ENCODE measurements at regions of chr14 and their contacts with region 1.

Region 1: DNA sequence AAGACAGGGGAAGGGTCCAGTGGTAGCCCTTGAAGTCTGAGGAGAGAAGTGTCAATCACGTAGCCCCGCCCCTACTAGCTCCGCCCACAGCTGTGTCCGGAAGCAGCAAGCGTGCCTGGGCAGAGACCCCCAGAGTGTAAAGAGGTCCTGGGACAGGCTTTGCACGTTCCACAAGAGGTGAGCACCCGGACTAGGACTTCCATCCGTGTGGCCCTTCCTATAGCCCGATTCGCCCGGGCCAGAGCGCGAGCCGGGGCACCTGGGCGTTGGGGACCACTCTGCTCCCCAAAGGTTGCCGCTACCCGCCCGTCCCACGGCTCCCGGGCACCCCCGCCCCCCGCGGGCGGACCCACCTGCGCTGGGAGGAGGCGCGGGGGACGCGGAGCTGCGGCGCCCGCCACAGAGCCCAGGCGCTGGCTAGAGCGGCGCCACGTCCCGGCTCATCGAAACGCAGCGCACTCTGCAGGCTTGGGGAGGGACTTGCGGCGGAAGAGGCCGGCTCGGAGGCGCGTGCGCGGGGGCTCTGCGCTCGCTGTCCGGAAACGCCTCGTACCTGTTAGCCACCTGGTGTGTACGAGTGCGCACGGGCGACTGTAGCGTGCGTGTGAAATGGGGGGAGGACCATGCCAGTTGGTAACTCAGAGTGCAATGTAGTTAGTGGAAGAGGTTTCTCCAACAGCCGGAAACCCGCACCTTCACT is at the start of gene RABGGTA:
- DNase-seq: peak; percentile 94
- ATAC-seq: peak; percentile 85
- H3K4me3 Mint-ChIP-seq: peak within 1 kb of the TSS; percentile 83
- H3K27ac Mint-ChIP-seq: peak within 1 kb of the TSS; percentile 97
- H3K4me1 Mint-ChIP-seq: peaks cover 46% of the 10 kb centered on the region
- H3K27me3 Mint-ChIP-seq: no peaks in the 10 kb centered on the region
- total RNA-seq, gene RABGGTA: 52.1 to 56.0 TPM

Region 2: DNA sequence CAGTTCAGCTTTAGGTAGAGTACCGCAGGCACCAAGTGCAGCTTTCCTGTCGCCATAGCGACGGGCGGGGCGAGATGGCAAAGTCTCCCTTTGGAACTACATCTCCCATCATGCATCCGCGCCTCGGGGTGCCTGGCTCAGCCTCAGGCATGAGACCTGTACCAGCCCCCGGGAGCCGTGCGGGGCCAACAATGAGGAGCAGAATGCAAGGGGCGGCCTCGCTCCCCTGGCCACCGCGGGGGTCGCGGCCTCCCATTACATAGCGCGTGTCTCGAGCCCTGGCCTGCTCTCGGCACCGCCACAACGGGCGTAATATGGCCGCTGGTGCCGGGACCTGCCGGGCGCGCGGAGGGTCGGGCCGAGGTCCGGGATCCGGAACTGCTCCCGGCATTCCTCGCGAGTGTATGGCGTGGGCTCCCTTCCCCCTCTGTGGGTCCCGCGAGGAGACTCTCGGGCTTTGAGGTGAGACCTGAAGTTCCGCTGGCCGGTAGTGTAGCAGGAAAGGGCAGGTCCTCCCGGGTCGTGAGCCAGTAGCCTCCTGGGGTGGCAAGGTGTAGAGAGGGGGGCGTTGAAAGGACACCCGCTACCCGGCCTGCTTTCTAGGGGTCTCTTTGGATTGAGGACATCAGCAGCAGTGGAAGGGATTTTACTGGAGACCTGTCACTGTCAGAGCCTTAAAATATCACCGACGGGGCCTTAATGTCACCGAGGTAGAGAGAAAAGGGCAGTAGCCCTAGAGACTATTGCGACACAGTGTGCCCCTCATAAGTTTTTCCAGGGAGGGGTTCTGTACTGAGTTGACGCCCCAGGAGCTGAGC is 715.2 kb before region 1 on chr14 and contains the start of gene THTPA:
- CTCF ChIA-PET with region 1: no interaction called
- POLR2A ChIA-PET with region 1: no interaction called
- intact Hi-C with region 1: loop called in 1 of 2 experiments (anchors 10 kb)
- DNase-seq: peak; percentile 96
- ATAC-seq: peak; percentile 83
- H3K4me3 Mint-ChIP-seq: peak within 1 kb of the TSS; percentile 95
- H3K27ac Mint-ChIP-seq: peak within 1 kb of the TSS; percentile 93
- H3K4me1 Mint-ChIP-seq: peaks cover 36% of the 10 kb centered on the region
- H3K27me3 Mint-ChIP-seq: no peaks in the 10 kb centered on the region
- total RNA-seq, gene THTPA: 8.3 to 8.5 TPM

Region 3: GRCh38 chr14:24146978-24147760 is 124.1 kb before region 1 on chr14 and contains the start of gene RNF31:
- CTCF ChIA-PET with region 1: interaction called, 4 read pairs
- POLR2A ChIA-PET with region 1: no interaction called
- intact Hi-C with region 1: loop called in 1 of 2 experiments (anchors 1 kb)
- DNase-seq: peak; percentile 99
- ATAC-seq: peak; percentile 89
- H3K4me3 Mint-ChIP-seq: peak within 1 kb of the TSS; percentile 94
- H3K27ac Mint-ChIP-seq: peak within 1 kb of the TSS; percentile 97
- H3K4me1 Mint-ChIP-seq: peaks cover 57% of the 10 kb centered on the region
- H3K27me3 Mint-ChIP-seq: no peaks in the 10 kb centered on the region
- total RNA-seq, gene RNF31: 73.7 to 98.4 TPM

Region 4: GRCh38 chr14:24215495-24216344 is 55.6 kb before region 1 on chr14 and contains the start of gene MDP1:
- CTCF ChIA-PET with region 1: interaction called, 8 read pairs
- POLR2A ChIA-PET with region 1: no interaction called
- intact Hi-C with region 1: loop called (anchors 1 kb)
- DNase-seq: peak; percentile 93
- ATAC-seq: peak; percentile 76
- H3K4me3 Mint-ChIP-seq: peak within 1 kb of the TSS; percentile 92
- H3K27ac Mint-ChIP-seq: peak within 1 kb of the TSS; percentile 95
- H3K4me1 Mint-ChIP-seq: peaks cover 44% of the 10 kb centered on the region
- H3K27me3 Mint-ChIP-seq: no peaks in the 10 kb centered on the region
- total RNA-seq, gene MDP1: 4.5 to 11.7 TPM

Region 5: DNA sequence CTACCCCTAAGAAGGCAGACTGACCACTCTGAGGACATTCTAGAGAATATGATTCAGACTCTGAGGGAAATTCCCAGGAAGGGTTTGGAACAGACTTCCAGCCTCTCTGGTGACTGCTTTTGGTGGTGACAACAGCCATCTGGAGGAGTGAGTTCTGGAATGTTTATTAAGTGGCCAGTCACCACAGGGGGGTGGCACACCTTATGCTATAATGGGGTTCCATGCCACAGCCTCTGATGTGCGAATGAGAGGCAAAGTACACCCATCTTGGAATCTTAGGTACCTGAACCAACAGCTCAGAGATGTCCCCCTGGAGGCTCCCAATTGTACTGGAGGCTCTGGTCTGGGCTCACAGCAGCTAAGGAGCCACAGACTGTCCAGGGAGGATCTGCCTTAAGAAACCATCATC is 19.4 kb before region 1 on chr14:
- CTCF ChIA-PET with region 1: interaction called, 20 read pairs
- POLR2A ChIA-PET with region 1: interaction called, 6 read pairs
- intact Hi-C with region 1: loop called in 1 of 2 experiments (anchors 1 kb)
- DNase-seq: no peak
- ATAC-seq: no peak
- H3K4me3 Mint-ChIP-seq: no peak overlapping the region
- H3K27ac Mint-ChIP-seq: no peak overlapping the region
- H3K4me1 Mint-ChIP-seq: peaks cover 29% of the 10 kb centered on the region
- H3K27me3 Mint-ChIP-seq: no peaks in the 10 kb centered on the region

Region 6: DNA sequence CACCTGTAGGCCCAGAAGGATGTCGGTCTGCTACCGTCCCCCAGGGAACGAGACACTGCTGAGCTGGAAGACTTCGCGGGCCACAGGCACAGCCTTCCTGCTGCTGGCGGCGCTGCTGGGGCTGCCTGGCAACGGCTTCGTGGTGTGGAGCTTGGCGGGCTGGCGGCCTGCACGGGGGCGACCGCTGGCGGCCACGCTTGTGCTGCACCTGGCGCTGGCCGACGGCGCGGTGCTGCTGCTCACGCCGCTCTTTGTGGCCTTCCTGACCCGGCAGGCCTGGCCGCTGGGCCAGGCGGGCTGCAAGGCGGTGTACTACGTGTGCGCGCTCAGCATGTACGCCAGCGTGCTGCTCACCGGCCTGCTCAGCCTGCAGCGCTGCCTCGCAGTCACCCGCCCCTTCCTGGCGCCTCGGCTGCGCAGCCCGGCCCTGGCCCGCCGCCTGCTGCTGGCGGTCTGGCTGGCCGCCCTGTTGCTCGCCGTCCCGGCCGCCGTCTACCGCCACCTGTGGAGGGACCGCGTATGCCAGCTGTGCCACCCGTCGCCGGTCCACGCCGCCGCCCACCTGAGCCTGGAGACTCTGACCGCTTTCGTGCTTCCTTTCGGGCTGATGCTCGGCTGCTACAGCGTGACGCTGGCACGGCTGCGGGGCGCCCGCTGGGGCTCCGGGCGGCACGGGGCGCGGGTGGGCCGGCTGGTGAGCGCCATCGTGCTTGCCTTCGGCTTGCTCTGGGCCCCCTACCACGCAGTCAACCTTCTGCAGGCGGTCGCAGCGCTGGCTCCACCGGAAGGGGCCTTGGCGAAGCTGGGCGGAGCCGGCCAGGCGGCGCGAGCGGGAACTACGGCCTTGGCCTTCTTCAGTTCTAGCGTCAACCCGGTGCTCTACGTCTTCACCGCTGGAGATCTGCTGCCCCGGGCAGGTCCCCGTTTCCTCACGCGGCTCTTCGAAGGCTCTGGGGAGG is 39.6 kb after region 1 on chr14 and contains the start of gene LTB4R:
- CTCF ChIA-PET with region 1: interaction called, 20 read pairs
- POLR2A ChIA-PET with region 1: interaction called, 6 read pairs
- intact Hi-C with region 1: loop called in 1 of 2 experiments (anchors 1 kb)
- DNase-seq: peak; percentile 81
- ATAC-seq: peak; percentile 83
- H3K4me3 Mint-ChIP-seq: peak within 1 kb of the TSS; percentile 70
- H3K27ac Mint-ChIP-seq: peak within 1 kb of the TSS; percentile 77
- H3K4me1 Mint-ChIP-seq: peaks cover 61% of the 10 kb centered on the region
- H3K27me3 Mint-ChIP-seq: no peaks in the 10 kb centered on the region
- total RNA-seq, gene LTB4R: 10.1 to 14.2 TPM